ENCODE measurements at regions of chr2 and their contacts with region 1.

Region 1: DNA sequence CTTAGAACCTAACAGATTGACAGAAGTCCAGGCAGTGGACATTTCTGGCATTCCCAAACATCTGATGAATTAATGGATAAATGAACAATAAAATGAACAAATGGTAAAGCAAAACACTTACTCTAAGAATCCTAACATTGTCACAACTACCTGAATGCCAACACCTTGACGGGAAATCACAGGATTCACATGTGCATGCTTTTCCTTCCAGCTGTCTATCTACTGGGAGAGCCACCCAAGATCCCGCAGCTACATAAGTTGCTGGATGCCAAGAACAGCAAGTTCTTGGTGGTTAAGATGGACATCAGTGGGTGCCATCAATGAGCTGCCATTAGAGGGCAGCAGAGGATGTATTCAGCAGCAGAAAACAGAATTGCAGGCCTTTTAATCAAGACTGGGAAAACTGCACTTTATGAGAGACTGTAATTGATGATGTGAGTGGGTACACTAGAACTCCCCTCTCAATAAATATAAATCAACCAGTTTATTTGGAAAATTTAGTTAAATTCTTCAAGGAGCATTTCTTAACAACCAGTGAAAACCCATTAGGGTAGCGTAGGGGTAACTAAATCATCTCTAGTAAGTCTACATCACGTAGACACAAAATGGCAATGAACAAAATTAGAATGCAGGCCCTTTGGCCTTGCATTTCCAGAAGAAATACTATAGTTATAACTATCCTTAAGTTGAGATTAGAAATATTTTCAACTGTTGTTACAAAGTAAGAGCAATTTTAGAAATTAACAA is 45.6 kb downstream of the SESTD1 start:
- DNase-seq: peak in 32 of 35 experiments; percentile 1 to 77 (median 18)
- ATAC-seq: peak in 2 of 4 experiments; percentile 42 to 53
- H3K4me3 ChIP-seq: no peak overlapping the region
- H3K4me3 Mint-ChIP-seq: no peak overlapping the region
- H3K27ac ChIP-seq: no peak overlapping the region
- H3K27ac Mint-ChIP-seq: no peak overlapping the region
- H3K4me1 ChIP-seq: no peaks in the 10 kb centered on the region
- H3K4me1 Mint-ChIP-seq: peaks cover 0 to 6% (median 2%) of the 10 kb centered on the region in 3 donors
- H3K27me3 ChIP-seq: no peaks in the 10 kb centered on the region
- H3K27me3 Mint-ChIP-seq: no peaks in the 10 kb centered on the region

Region 2: GRCh38 chr2:179235463-179236108 is 16.6 kb after region 1 on chr2:
- CTCF ChIA-PET with region 1: interaction called in 1 of 2 experiments, 18 read pairs
- POLR2A ChIA-PET with region 1: no interaction called
- DNase-seq: no peak
- ATAC-seq: no peak
- H3K4me3 ChIP-seq: no peak overlapping the region
- H3K4me3 Mint-ChIP-seq: no peak overlapping the region
- H3K27ac ChIP-seq: no peak overlapping the region
- H3K27ac Mint-ChIP-seq: no peak overlapping the region
- H3K4me1 ChIP-seq: peaks cover 0 to 11% of the 10 kb centered on the region in 2 experiments
- H3K4me1 Mint-ChIP-seq: peaks cover 20 to 45% (median 31%) of the 10 kb centered on the region in 3 donors
- H3K27me3 ChIP-seq: no peaks in the 10 kb centered on the region
- H3K27me3 Mint-ChIP-seq: no peaks in the 10 kb centered on the region

Region 3: GRCh38 chr2:179701524-179702110 is 482.6 kb after region 1 on chr2:
- CTCF ChIA-PET with region 1: no interaction called
- POLR2A ChIA-PET with region 1: no interaction called
- DNase-seq: no peak
- ATAC-seq: no peak
- H3K4me3 ChIP-seq: no peak overlapping the region
- H3K4me3 Mint-ChIP-seq: no peak overlapping the region
- H3K27ac ChIP-seq: no peak overlapping the region
- H3K27ac Mint-ChIP-seq: no peak overlapping the region
- H3K4me1 ChIP-seq: no peaks in the 10 kb centered on the region
- H3K4me1 Mint-ChIP-seq: no peaks in the 10 kb centered on the region
- H3K27me3 ChIP-seq: no peaks in the 10 kb centered on the region
- H3K27me3 Mint-ChIP-seq: no peaks in the 10 kb centered on the region